Brain microvascular endothelial cell (primary cell): ENCODE measurements at regions of chr13 and their contacts with region 1.

Region 1: DNA sequence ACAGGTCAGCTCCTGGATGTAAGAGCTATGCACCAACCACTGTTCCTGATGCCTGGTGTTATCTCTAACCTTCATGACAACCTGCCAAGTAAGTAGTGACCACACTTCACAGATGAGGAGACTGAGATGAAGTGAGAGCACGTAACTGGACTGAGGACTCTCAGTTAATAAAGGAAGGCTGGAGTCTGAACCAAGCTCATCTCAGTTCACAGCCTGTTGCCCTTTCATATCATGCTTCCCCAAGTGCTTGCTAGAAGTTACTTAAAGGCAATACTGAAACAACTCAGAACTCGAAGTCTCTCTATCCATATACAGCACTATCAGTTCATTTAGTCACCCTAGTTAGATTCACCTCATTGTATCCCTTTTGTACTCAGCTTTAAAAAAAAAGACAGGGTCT is 119.7 kb downstream of the ABCC4 start:
- DNase-seq: no peak
- H3K4me3 ChIP-seq: no peak overlapping the region
- H3K27ac ChIP-seq: no peak overlapping the region
- H3K27me3 ChIP-seq: no peaks in the 10 kb centered on the region
- CTCF ChIP-seq: no peak

Region 2: DNA sequence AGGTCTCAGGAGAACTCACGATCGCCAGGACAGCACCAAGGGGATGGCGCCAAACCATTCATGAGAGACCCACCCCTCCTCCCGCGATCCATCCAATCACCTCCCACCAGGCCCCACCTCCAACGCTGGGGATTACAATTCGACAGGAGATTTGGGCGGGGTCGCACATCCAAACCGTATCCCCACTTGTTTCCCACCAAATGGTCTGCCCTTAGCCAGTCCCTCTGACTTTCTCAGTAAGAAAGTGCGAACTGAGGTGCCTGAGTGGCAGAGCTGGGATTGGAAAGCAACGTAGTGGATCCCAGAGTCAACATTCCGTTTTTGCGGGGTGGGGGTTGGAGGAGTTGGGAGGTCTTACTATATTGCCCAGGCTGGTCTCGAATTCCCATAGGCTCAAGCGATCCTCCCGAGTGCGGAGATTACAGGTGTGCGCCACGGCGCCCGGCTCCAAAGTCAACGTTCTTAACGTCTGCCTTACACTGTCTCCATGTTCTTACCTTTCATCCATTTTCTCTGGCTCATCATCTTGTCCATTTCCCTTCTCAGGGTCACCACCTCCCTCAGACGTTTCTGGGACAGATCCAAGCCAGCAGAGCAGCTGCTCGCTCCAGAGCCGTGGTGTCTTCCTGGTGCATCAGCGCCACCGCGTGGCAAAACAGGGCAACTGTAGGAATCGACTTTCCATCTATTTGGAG is 222.4 kb after region 1 on chr13:
- in situ Hi-C with region 1: loop called (anchors 10 kb)
- DNase-seq: peak; percentile 72
- H3K4me3 ChIP-seq: peak overlapping the region; percentile 54
- H3K27ac ChIP-seq: no peak overlapping the region
- H3K27me3 ChIP-seq: no peaks in the 10 kb centered on the region
- CTCF ChIP-seq: peak; percentile 92

Region 3: GRCh38 chr13:95704510-95704909 is 522.9 kb after region 1 on chr13:
- in situ Hi-C with region 1: no loop called
- DNase-seq: peak; percentile 4
- H3K4me3 ChIP-seq: no peak overlapping the region
- H3K27ac ChIP-seq: no peak overlapping the region
- H3K27me3 ChIP-seq: no peaks in the 10 kb centered on the region
- CTCF ChIP-seq: peak; percentile 57